ENCODE measurements at regions of chr2 and their contacts with region 1.

Region 1: DNA sequence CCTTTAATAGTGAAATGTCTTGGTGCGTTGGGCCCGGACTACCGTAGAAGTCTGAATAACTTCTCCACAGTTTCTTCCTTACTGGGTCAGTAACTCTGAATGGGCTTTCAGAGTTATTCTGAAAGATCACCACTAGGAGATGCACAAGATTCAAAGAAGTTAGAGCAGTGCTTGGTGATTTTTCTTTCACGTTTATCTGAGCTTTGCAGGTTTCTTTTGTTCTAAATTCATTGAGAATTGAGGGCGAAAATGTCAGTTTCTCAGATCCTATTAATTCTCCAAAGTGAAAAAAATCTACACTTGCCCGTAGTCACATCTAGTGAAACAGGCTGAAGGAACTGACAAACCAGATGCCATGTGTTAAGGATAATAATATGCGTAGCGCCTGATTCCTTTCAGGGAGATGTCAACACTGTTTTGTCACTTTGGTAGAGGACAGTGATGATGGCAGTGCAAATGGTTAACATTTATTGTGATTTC is 70.1 kb downstream of the QPCT start:
- DNase-seq: peak; percentile 52
- H3K4me3 ChIP-seq: no peak overlapping the region
- H3K27ac ChIP-seq: no peak overlapping the region
- H3K4me1 ChIP-seq: no peaks in the 10 kb centered on the region
- H3K27me3 ChIP-seq: no peaks in the 10 kb centered on the region
- CTCF ChIP-seq: peak; percentile 93 to 95

Region 2: DNA sequence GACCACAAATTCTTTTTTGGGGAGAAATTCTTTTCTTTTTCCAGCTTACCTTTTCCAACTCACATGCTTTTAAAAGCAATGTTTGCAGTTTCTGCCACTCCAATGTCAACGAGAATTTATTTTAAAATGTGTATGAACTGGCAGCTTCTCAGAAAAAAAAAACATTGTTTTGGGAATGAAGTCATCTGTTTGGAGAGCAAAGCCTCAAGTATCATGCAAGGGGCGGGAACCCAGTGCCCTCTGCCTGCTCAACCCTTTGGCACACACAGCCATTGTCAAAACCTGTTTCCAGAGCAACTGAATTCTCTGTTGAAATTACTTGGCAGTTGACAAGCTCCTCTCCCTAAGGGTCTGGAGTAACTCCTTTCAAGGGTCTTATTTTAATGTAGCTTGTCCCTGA is 58.4 kb after region 1 on chr2:
- CTCF ChIA-PET with region 1: no interaction called
- dilution Hi-C with region 1: no loop called
- in situ Hi-C with region 1: no loop called
- intact Hi-C with region 1: no loop called
- DNase-seq: peak; percentile 87
- H3K4me3 ChIP-seq: no peak overlapping the region
- H3K27ac ChIP-seq: peak overlapping the region; percentile 63
- H3K4me1 ChIP-seq: peaks cover 20% of the 10 kb centered on the region
- H3K27me3 ChIP-seq: no peaks in the 10 kb centered on the region
- CTCF ChIP-seq: no peak

Region 3: DNA sequence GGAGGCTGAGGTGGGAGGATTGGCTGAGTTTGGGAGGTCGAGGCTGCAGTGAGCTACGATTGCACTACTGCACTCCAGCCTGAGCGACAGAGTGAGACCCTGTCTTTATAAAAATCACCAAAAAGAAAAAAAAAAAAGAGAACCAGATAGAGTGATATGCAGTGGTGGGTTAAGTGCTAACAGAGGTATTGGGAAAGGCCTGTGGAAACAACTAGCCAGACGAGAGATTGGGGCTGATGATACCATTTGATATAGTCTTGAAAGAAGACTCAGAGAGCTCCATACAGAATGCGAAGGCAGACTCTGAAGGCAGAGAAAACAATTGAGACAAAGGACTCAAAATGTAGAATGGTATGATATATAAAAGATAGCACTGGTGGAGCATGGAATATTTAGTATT is 122.8 kb after region 1 on chr2:
- CTCF ChIA-PET with region 1: no interaction called
- dilution Hi-C with region 1: no loop called
- in situ Hi-C with region 1: no loop called
- intact Hi-C with region 1: loop called (anchors 1 kb)
- DNase-seq: no peak
- H3K4me3 ChIP-seq: no peak overlapping the region
- H3K27ac ChIP-seq: no peak overlapping the region
- H3K4me1 ChIP-seq: no peaks in the 10 kb centered on the region
- H3K27me3 ChIP-seq: no peaks in the 10 kb centered on the region
- CTCF ChIP-seq: no peak

Region 4: DNA sequence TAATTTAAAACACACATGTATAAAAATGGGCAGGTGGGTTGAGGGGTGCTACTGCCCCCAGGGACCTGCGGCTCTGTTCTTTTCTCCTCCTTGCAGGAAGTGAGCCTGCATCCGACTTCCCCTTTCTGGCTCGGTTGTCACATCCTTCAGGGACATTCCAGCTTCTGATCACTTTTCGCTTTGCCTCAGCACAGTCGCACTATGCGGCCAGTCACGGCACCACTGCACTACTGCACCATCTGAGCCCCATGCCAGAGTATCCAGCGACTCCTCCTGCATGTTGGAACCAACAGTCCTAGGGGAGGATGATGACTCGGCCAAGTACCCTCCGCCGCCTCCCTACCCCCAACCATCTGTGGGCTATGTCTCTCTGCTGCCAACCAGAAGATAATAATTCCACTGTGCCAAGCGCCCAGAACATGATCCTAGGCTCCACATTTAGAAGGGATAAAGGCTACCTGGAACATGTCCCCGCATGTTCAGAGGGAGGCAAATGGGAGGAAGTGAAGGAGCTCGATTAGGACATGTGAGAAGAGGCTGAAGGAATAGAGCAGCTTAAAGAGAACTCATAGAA is 239.4 kb after region 1 on chr2:
- CTCF ChIA-PET with region 1: interaction called, 15 read pairs
- dilution Hi-C with region 1: no loop called
- in situ Hi-C with region 1: loop called in 1 of 2 experiments (anchors 10 kb)
- intact Hi-C with region 1: loop called (anchors 5 kb)
- DNase-seq: peak; percentile 86
- H3K4me3 ChIP-seq: peak overlapping the region in 1 of 3 experiments; percentile 17
- H3K27ac ChIP-seq: peak overlapping the region; percentile 85
- H3K4me1 ChIP-seq: peaks cover 73% of the 10 kb centered on the region
- H3K27me3 ChIP-seq: no peaks in the 10 kb centered on the region
- CTCF ChIP-seq: no peak

Region 5: DNA sequence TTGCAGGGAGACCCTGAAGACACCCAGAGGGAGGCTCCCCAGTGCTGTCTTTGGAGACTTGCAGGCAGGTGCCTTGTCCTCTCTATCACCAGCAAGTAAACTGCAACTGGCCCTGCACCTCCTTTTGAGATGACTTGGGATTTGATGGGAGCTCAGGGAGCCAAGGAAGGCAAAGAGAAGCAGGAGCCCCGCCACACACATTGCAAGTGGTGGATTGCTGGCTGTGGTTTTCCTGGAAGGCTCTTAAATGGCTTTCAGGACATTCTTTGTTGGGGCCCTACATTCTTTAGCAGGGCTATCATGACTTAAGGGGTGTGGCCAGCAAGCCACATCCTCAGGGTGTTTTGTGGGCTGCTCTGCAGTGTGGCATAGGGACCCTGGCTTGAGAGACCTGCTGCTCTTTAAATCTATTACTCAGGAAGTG is 296.8 kb after region 1 on chr2:
- CTCF ChIA-PET with region 1: no interaction called
- dilution Hi-C with region 1: no loop called
- in situ Hi-C with region 1: no loop called
- intact Hi-C with region 1: loop called (anchors 1 kb)
- DNase-seq: peak; percentile 73
- H3K4me3 ChIP-seq: peak overlapping the region in 1 of 3 experiments; percentile 9
- H3K27ac ChIP-seq: peak overlapping the region; percentile 52
- H3K4me1 ChIP-seq: peaks cover 24% of the 10 kb centered on the region
- H3K27me3 ChIP-seq: no peaks in the 10 kb centered on the region
- CTCF ChIP-seq: no peak

Region 6: DNA sequence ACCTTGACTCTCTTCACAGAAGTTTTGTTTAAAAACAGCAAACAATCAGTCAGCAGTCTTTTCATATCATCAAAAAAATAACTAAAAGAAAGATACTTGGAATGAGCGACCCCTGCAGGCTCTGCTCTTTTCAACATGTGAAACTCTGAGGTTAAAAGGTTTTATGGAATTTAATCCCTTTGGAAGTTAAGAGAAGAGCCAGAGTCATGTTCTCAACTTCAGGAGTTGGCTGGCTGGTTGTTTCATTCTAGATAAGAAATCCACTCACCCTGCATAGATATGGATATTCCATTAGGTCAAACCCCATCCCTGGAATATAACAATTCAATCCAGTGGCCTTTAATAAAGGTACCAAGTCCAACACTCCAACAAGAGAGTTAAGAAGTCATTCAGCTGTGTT is 395.0 kb after region 1 on chr2:
- CTCF ChIA-PET with region 1: no interaction called
- dilution Hi-C with region 1: no loop called
- in situ Hi-C with region 1: no loop called
- intact Hi-C with region 1: loop called (anchors 1 kb)
- DNase-seq: peak; percentile 42
- H3K4me3 ChIP-seq: no peak overlapping the region
- H3K27ac ChIP-seq: no peak overlapping the region
- H3K4me1 ChIP-seq: no peaks in the 10 kb centered on the region
- H3K27me3 ChIP-seq: no peaks in the 10 kb centered on the region
- CTCF ChIP-seq: peak; percentile 63 to 65

Region 7: GRCh38 chr2:37877457-37878315 is 463.2 kb after region 1 on chr2:
- CTCF ChIA-PET with region 1: interaction called, 9 read pairs
- dilution Hi-C with region 1: no loop called
- in situ Hi-C with region 1: loop called (anchors 10 kb)
- intact Hi-C with region 1: loop called (anchors 1 kb)
- DNase-seq: peak; percentile 46
- H3K4me3 ChIP-seq: no peak overlapping the region
- H3K27ac ChIP-seq: no peak overlapping the region
- H3K4me1 ChIP-seq: peaks cover 3% of the 10 kb centered on the region
- H3K27me3 ChIP-seq: no peaks in the 10 kb centered on the region
- CTCF ChIP-seq: peak; percentile 38 to 64

Region 8: GRCh38 chr2:38115216-38116032 is 700.9 kb after region 1 on chr2:
- CTCF ChIA-PET with region 1: no interaction called
- dilution Hi-C with region 1: no loop called
- in situ Hi-C with region 1: no loop called
- intact Hi-C with region 1: loop called (anchors 10 kb)
- DNase-seq: peak; percentile 70
- H3K4me3 ChIP-seq: no peak overlapping the region
- H3K27ac ChIP-seq: peak overlapping the region; percentile 29
- H3K4me1 ChIP-seq: peaks cover 25% of the 10 kb centered on the region
- H3K27me3 ChIP-seq: no peaks in the 10 kb centered on the region
- CTCF ChIP-seq: peak; percentile 100